ENCODE measurements at regions of chr3 and their contacts with region 1.

Region 1: GRCh38 chr3:58630076-58630709 is 36.4 kb downstream of the FAM3D start:
- DNase-seq: peak in 5 of 6 donors; percentile 36 to 72 (median 60)
- ATAC-seq: peak; percentile 60 to 80 (median 68)
- H3K4me3 ChIP-seq: no peak overlapping the region
- H3K27ac ChIP-seq: peak overlapping the region in 1 of 4 donors; percentile 74
- H3K4me1 ChIP-seq: peaks cover 0 to 23% (median 10%) of the 10 kb centered on the region in 3 donors
- H3K27me3 ChIP-seq: no peaks in the 10 kb centered on the region
- CTCF ChIP-seq: peak; percentile 87 to 94 (median 89)

Region 2: DNA sequence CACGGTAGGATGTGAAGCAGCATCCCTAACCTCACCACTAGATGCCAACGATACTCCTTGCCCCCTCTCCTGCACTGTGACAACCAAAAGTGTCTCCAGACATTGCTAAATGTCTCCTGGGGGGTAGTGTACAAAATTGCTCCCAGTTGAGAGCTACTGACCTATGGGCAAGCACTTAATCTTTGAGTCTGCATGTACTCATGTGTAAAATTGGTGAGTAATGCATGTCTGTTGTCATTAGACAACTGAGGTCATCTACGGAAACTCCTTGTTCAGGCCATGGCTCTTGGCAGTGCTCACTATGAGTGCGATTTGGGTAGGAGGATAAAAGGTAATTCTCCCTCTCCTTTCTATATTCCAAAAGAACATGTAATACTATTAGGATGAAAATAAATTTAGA is 225.8 kb before region 1 on chr3:
- intact Hi-C with region 1: no loop called
- DNase-seq: no peak
- ATAC-seq: peak in 2 of 4 donors; percentile 53 to 60
- H3K4me3 ChIP-seq: no peak overlapping the region
- H3K27ac ChIP-seq: no peak overlapping the region
- H3K4me1 ChIP-seq: no peaks in the 10 kb centered on the region
- H3K27me3 ChIP-seq: no peaks in the 10 kb centered on the region
- CTCF ChIP-seq: no peak

Region 3: DNA sequence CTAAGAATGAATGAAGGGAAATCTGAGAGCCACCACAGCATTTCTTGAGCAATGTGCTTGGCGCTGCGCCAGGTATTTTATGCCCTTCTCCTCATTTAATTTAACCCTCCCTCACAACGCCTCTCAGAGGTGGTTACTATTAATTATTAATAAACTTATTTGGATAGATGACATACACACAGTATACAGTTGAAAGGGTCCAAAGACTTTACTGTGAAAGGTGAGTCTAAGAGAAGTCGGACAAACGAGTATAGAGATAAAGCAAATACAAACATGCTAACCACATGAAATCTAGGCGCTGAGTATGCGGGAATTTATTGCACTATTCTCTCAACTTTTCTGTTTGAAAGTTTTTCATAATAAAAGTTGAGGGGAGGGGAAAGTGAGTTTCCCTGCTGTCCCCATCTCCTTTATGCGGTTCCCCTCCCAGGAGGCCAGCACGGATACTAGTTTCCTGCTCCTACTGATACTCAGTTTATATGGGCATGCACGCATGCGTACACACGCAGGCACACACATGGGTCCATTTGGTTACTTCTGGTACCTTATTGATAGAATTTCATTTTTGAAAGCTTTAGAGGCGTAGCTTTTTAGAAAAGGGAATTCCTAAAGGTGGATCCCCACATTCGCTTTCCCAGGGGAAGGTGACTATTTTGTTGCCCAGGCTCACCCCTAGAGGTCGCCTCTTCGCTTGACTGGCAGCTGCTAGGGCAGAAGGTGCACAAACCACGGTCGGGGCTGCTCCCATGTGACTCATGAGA is 166.8 kb before region 1 on chr3:
- intact Hi-C with region 1: loop called in 1 of 3 experiments (anchors 10 kb)
- DNase-seq: peak; percentile 56 to 80 (median 72)
- ATAC-seq: peak; percentile 85 to 98 (median 98)
- H3K4me3 ChIP-seq: peak overlapping the region in 2 of 4 donors; percentile 11 to 37
- H3K27ac ChIP-seq: no peak overlapping the region
- H3K4me1 ChIP-seq: peaks cover 0 to 5% (median 0%) of the 10 kb centered on the region in 3 donors
- H3K27me3 ChIP-seq: no peaks in the 10 kb centered on the region
- CTCF ChIP-seq: peak; percentile 40 to 77 (median 66)

Region 4: GRCh38 chr3:58568572-58569286 is 61.5 kb before region 1 on chr3:
- intact Hi-C with region 1: loop called in 2 of 3 experiments (anchors 5 kb)
- DNase-seq: peak; percentile 47 to 96 (median 79)
- ATAC-seq: peak; percentile 54 to 81 (median 76)
- H3K4me3 ChIP-seq: no peak overlapping the region
- H3K27ac ChIP-seq: no peak overlapping the region
- H3K4me1 ChIP-seq: peaks cover 7 to 12% (median 10%) of the 10 kb centered on the region in 3 donors
- H3K27me3 ChIP-seq: no peaks in the 10 kb centered on the region
- CTCF ChIP-seq: peak; percentile 81 to 95 (median 92)